ENCODE measurements at regions of chr2 and their contacts with region 1.

Region 1: DNA sequence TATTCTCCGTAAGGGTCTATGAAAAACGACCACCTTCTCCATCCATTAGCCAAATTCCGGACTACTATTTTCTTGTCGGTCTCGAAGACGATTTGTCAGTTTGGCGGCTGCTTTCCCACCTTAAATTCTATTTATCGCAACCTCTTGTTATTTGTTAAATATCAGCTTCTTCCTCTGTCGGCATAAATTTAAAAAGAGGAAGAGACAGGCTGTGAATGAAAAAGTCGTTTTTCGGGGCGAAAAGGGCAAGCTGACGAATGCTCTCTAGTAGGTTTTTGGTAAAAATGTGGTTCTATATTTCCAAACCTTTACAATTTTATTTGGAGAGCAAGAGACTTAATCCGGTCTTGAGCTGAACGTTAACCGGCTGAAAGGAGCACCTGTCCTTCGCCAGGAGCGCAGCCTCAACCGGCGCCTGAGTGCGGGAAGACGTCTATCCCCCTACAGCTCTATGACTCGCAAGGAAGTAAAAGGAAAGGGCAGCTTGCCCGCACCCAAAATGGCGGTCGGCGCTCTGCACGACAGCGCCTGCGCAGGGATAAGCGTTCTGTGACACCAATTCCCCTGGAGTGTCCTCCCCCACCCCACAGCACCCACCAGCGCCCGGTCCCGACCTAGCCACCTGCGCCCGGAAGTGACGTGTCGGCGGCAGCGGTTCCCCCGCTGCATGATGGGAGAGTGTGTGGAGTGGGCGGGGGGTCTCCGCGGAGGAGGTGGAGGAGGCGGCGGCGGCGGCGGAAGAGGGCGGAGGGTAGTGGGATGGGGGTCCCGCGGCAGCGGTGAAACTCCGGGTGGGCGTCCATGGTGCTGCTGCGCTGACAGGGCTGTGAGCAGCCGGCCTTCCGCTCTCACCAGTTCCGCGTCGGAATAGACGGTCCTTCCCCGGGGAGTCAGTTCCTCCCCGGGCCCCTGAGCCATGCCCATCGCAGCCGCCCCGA is at the start of gene AFTPH:
- DNase-seq: peak; percentile 99
- ATAC-seq: peak; percentile 89
- H3K4me3 ChIP-seq: peak within 1 kb of the TSS; percentile 74 to 99 (median 97)
- H3K4me3 Mint-ChIP-seq: peak within 1 kb of the TSS; percentile 98
- H3K27ac ChIP-seq: peak within 1 kb of the TSS; percentile 92 to 97
- H3K27ac Mint-ChIP-seq: peak within 1 kb of the TSS; percentile 100
- H3K4me1 ChIP-seq: peaks cover 34 to 36% of the 10 kb centered on the region in 2 donors
- H3K4me1 Mint-ChIP-seq: peaks cover 45% of the 10 kb centered on the region
- H3K27me3 ChIP-seq: no peaks in the 10 kb centered on the region
- H3K27me3 Mint-ChIP-seq: no peaks in the 10 kb centered on the region
- CTCF ChIP-seq: no peak
- total RNA-seq, gene AFTPH: 91.6 and 94.1 TPM in 2 replicates

Region 2: DNA sequence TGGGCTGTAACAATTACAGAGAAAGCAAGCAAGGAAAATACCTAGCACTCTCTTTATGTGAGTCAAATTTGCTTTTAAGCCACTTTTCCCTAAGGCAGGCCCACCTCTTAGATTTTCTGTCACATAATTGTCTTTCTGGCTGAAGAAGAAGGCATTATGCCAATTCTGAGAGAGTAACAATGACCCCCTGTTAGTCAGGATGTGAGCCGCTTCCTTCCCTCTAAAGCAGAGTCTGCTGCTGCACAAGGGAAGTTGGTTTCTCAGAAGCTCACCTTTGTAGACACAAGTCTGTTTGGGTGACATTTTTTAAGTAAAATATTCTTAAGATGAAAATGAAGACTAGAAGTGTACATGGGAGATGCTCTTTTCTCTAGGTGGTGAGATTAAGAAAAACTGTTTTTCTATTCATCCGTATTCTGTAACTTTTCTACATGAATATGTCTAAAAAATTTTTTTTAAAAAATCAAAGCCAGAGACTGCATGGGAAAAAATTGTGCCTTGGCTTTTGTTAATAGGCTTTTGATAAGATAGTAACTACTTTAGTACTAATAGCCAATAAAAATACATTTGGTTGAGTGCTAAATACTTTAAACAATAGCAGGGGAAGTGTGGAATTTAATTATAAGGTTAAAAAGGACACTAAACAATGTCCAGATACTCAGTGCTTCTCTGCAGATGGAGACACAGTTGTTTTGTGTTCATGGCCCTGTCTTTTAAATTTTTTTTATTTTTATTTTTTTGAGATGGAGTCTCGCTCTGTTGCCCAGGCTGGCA is 471.3 kb before region 1 on chr2:
- CTCF ChIA-PET with region 1: interaction called, 11 read pairs
- POLR2A ChIA-PET with region 1: interaction called, 3 read pairs
- intact Hi-C with region 1: no loop called
- DNase-seq: no peak
- ATAC-seq: no peak
- H3K4me3 ChIP-seq: no peak overlapping the region
- H3K4me3 Mint-ChIP-seq: no peak overlapping the region
- H3K27ac ChIP-seq: no peak overlapping the region
- H3K27ac Mint-ChIP-seq: no peak overlapping the region
- H3K4me1 ChIP-seq: peaks cover 10 to 12% of the 10 kb centered on the region in 2 donors
- H3K4me1 Mint-ChIP-seq: peaks cover 23% of the 10 kb centered on the region
- H3K27me3 ChIP-seq: no peaks in the 10 kb centered on the region
- H3K27me3 Mint-ChIP-seq: no peaks in the 10 kb centered on the region
- CTCF ChIP-seq: no peak

Region 3: GRCh38 chr2:64267699-64268098 is 256.2 kb before region 1 on chr2:
- CTCF ChIA-PET with region 1: no interaction called
- POLR2A ChIA-PET with region 1: no interaction called
- intact Hi-C with region 1: no loop called
- DNase-seq: no peak
- ATAC-seq: no peak
- H3K4me3 ChIP-seq: no peak overlapping the region
- H3K4me3 Mint-ChIP-seq: no peak overlapping the region
- H3K27ac ChIP-seq: no peak overlapping the region
- H3K27ac Mint-ChIP-seq: no peak overlapping the region
- H3K4me1 ChIP-seq: peaks cover 5 to 8% of the 10 kb centered on the region in 2 donors
- H3K4me1 Mint-ChIP-seq: peaks cover 12% of the 10 kb centered on the region
- H3K27me3 ChIP-seq: no peaks in the 10 kb centered on the region
- H3K27me3 Mint-ChIP-seq: no peaks in the 10 kb centered on the region
- CTCF ChIP-seq: no peak

Region 4: DNA sequence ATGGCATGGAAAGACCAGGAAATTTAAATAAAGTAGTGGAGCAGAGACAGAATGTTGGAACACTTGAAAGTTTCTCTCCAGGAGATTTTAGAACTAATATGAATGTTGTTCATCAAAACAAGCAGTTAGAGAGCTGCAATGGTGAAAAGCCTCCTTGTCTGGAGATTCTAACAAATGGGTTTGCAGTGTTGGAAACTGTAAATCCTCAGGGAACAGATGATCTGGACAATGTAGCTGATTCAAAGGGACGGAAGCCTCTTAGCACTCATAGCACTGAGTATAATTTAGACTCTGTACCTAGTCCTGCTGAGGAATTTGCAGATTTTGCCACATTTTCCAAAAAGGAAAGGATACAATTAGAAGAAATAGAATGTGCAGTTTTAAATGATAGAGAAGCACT is 27.9 kb after region 1 on chr2:
- CTCF ChIA-PET with region 1: interaction called, 217 read pairs
- POLR2A ChIA-PET with region 1: no interaction called
- intact Hi-C with region 1: no loop called
- DNase-seq: no peak
- ATAC-seq: no peak
- H3K4me3 ChIP-seq: no peak overlapping the region
- H3K4me3 Mint-ChIP-seq: no peak overlapping the region
- H3K27ac ChIP-seq: no peak overlapping the region
- H3K27ac Mint-ChIP-seq: no peak overlapping the region
- H3K4me1 ChIP-seq: peaks cover 3 to 5% of the 10 kb centered on the region in 2 donors
- H3K4me1 Mint-ChIP-seq: peaks cover 37% of the 10 kb centered on the region
- H3K27me3 ChIP-seq: no peaks in the 10 kb centered on the region
- H3K27me3 Mint-ChIP-seq: no peaks in the 10 kb centered on the region
- CTCF ChIP-seq: no peak

Region 5: DNA sequence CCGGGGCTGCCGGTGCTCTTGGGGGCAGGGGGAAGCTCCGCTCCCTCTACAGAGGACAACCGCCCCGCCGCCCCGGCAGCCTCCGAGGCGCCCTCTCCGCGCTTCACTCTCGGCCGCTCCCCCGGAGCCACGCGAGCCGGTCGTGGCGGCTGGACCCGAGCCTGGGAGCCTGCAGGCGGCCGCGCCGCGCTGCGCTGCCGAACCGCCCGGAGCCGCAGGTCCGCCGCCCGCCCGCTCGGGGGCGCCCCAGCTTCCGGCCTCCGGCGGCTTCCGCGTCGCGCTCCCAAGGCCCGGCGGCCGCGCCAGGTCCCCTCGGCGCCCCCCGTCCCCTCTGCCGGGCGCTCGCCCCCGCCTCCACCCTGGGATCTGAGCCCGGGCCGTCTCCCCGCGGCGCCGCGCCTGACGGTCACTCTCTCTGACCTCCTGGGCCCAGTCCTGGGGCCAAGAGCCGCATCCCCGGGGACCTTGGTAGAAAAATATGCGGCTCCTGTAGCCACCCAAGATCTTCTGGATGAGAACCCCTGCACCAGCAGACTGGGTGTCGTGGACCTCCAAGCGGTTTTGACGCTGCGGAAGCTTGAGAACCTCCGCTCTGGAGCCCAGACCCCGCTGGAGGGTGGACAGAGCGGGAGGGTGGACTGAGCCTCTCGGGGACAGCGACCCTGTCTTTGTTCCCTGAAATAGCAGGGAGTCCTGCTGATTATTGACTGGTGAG is 85.4 kb after region 1 on chr2:
- CTCF ChIA-PET with region 1: interaction called, 10 read pairs
- POLR2A ChIA-PET with region 1: interaction called, 3 read pairs
- intact Hi-C with region 1: no loop called
- DNase-seq: peak; percentile 86
- ATAC-seq: peak; percentile 72
- H3K4me3 ChIP-seq: peak overlapping the region; percentile 51 to 77 (median 64)
- H3K4me3 Mint-ChIP-seq: peak overlapping the region; percentile 78
- H3K27ac ChIP-seq: peak overlapping the region; percentile 53 to 84
- H3K27ac Mint-ChIP-seq: peak overlapping the region; percentile 78
- H3K4me1 ChIP-seq: peaks cover 22 to 34% of the 10 kb centered on the region in 2 donors
- H3K4me1 Mint-ChIP-seq: peaks cover 29% of the 10 kb centered on the region
- H3K27me3 ChIP-seq: no peaks in the 10 kb centered on the region
- H3K27me3 Mint-ChIP-seq: no peaks in the 10 kb centered on the region
- CTCF ChIP-seq: peak; percentile 53

Region 6: GRCh38 chr2:64767670-64768468 is 243.9 kb after region 1 on chr2:
- CTCF ChIA-PET with region 1: no interaction called
- POLR2A ChIA-PET with region 1: interaction called, 4 read pairs
- intact Hi-C with region 1: loop called (anchors 2 kb)
- DNase-seq: peak; percentile 88
- ATAC-seq: peak; percentile 79
- H3K4me3 ChIP-seq: peak overlapping the region; percentile 60 to 99 (median 87)
- H3K4me3 Mint-ChIP-seq: peak overlapping the region; percentile 94
- H3K27ac ChIP-seq: peak overlapping the region; percentile 82 to 95
- H3K27ac Mint-ChIP-seq: peak overlapping the region; percentile 97
- H3K4me1 ChIP-seq: peaks cover 13% of the 10 kb centered on the region in 2 donors
- H3K4me1 Mint-ChIP-seq: peaks cover 24% of the 10 kb centered on the region
- H3K27me3 ChIP-seq: no peaks in the 10 kb centered on the region
- H3K27me3 Mint-ChIP-seq: no peaks in the 10 kb centered on the region
- CTCF ChIP-seq: no peak

Region 7: GRCh38 chr2:64914735-64915509 is 391.0 kb after region 1 on chr2:
- CTCF ChIA-PET with region 1: interaction called, 6 read pairs
- POLR2A ChIA-PET with region 1: interaction called, 3 read pairs
- intact Hi-C with region 1: loop called (anchors 1 kb)
- DNase-seq: peak; percentile 80
- ATAC-seq: peak; percentile 79
- H3K4me3 ChIP-seq: no peak overlapping the region
- H3K4me3 Mint-ChIP-seq: peak overlapping the region; percentile 62
- H3K27ac ChIP-seq: peak overlapping the region in 1 of 2 donors; percentile 58
- H3K27ac Mint-ChIP-seq: peak overlapping the region; percentile 66
- H3K4me1 ChIP-seq: peaks cover 57 to 68% of the 10 kb centered on the region in 2 donors
- H3K4me1 Mint-ChIP-seq: peaks cover 59% of the 10 kb centered on the region
- H3K27me3 ChIP-seq: no peaks in the 10 kb centered on the region
- H3K27me3 Mint-ChIP-seq: no peaks in the 10 kb centered on the region
- CTCF ChIP-seq: no peak

Region 8: DNA sequence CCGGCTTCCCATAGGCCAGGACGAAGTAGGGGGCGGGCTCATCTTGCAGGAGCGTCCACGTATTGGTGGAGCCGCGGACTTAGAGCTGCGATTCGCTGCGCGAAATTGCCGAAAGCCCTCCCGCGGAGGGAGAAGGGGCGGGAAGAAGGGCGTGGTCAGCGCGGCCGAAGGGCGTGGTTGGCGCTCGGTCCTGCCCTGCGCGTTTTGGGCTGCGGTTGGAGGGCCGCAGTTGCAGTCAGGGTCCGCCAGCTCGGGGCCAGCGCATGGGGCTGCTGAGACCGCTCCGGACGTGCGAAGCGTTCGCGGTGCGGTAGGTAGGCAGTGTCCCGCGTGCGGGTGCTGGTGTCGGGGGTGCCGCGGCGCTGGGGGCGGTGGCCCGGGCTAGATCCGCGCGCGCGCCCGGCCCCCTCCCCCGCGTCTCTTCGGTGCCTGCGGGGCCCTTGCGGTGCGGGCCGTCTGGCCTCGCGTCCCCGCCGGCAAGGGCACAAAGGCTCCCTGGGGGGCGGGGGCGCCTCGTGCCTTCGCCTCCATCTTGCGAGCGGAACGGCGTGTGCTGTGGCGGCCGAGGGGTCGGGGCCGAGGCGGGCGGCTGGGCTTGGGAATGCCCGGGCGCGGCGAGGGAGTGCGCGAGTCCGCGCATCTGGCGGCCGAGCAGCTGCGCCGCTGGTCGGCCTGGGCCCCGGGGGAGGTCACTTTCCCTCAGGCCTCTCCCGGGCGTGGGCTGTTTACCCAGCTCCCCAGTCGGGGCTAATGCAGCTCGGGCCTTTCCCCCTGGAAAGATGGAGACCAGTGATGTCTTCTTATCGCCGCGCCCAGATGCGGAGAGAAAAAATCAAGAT is 532.5 kb after region 1 on chr2 and contains the start of gene CEP68:
- CTCF ChIA-PET with region 1: no interaction called
- POLR2A ChIA-PET with region 1: no interaction called
- intact Hi-C with region 1: loop called (anchors 2 kb)
- DNase-seq: peak; percentile 98
- ATAC-seq: peak; percentile 92
- H3K4me3 ChIP-seq: peak within 1 kb of the TSS; percentile 76 to 81 (median 80)
- H3K4me3 Mint-ChIP-seq: peak within 1 kb of the TSS; percentile 100
- H3K27ac ChIP-seq: peak within 1 kb of the TSS; percentile 78 to 88
- H3K27ac Mint-ChIP-seq: peak within 1 kb of the TSS; percentile 99
- H3K4me1 ChIP-seq: peaks cover 47 to 48% of the 10 kb centered on the region in 2 donors
- H3K4me1 Mint-ChIP-seq: peaks cover 65% of the 10 kb centered on the region
- H3K27me3 ChIP-seq: no peaks in the 10 kb centered on the region
- H3K27me3 Mint-ChIP-seq: no peaks in the 10 kb centered on the region
- CTCF ChIP-seq: no peak
- total RNA-seq, gene CEP68: 31.8 and 32.0 TPM in 2 replicates

Measured in B cell (primary cell).